Activated CD4-positive, alpha-beta T cell treated with anti-CD3 and anti-CD28 coated beads for 36 hours (primary cell): ENCODE measurements at regions of chr14 and their contacts with region 1.

Region 1: DNA sequence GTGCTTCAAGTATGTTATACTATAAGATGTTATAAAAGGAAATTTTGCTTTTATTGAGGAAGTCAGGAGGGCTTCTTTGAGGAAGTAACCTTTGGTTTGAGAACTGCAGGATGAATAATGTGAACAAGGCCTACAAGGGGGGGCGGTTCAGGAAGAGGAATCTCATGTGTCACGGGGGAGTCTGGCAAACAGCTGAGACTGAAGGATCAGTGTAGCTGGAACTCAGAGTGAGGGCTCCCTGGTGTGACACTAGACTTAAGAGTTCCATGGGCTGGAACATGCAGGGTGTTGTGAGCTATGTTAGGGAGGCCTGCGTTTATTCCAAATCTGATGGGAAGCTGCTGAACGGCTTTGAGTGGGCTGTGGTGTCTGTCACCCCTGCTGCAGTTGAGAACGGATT is 62.3 kb downstream of the UNC79 start:
- DNase-seq: no peak
- ATAC-seq: no peak
- H3K4me3 Mint-ChIP-seq: no peak overlapping the region
- H3K27ac Mint-ChIP-seq: no peak overlapping the region
- H3K4me1 Mint-ChIP-seq: no peaks in the 10 kb centered on the region
- H3K27me3 Mint-ChIP-seq: peaks cover 4% of the 10 kb centered on the region

Region 2: GRCh38 chr14:93219103-93219726 is 273.8 kb before region 1 on chr14:
- CTCF ChIA-PET with region 1: no interaction called
- POLR2A ChIA-PET with region 1: interaction called, 15 read pairs
- intact Hi-C with region 1: no loop called
- DNase-seq: peak; percentile 57
- ATAC-seq: peak; percentile 63
- H3K4me3 Mint-ChIP-seq: no peak overlapping the region
- H3K27ac Mint-ChIP-seq: no peak overlapping the region
- H3K4me1 Mint-ChIP-seq: no peaks in the 10 kb centered on the region
- H3K27me3 Mint-ChIP-seq: no peaks in the 10 kb centered on the region

Region 3: DNA sequence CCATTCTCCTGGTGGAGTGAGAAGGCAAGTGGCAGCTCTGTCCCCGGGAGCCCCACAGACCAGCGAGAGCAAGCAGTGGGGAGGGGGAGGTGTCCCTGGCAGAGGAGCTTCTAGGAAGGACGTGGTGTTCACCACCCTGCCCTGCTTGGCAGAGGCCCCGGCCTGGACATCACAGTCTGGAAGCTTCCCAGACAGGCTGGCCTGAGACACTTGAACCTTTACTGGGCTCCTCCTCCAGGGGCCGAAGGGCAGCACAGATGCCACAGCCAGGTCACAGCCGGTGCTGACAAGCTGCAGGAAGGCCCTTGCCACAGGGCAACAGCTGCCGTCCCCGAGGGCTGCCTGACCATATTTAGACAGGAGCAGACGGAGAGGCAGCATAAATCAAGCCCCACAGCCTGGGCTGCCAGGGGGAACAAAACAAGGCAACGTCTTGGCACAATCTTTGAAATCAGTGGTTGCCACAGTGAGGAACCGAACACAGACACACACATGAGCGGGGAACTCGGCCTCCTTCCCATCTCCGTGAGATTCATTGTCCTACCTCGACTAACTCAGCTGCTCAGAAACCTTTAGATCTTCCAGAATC is 266.8 kb after region 1 on chr14:
- CTCF ChIA-PET with region 1: no interaction called
- POLR2A ChIA-PET with region 1: no interaction called
- intact Hi-C with region 1: no loop called
- DNase-seq: no peak
- ATAC-seq: no peak
- H3K4me3 Mint-ChIP-seq: no peak overlapping the region
- H3K27ac Mint-ChIP-seq: no peak overlapping the region
- H3K4me1 Mint-ChIP-seq: no peaks in the 10 kb centered on the region
- H3K27me3 Mint-ChIP-seq: peaks cover 16% of the 10 kb centered on the region